ENCODE measurements at regions of chr3 and their contacts with region 1.

Region 1: GRCh38 chr3:40524568-40525285 is at the start of gene ZNF621:
- DNase-seq: peak; percentile 92
- H3K4me3 ChIP-seq: peak within 1 kb of the TSS; percentile 51
- H3K27ac ChIP-seq: peak within 1 kb of the TSS; percentile 82
- H3K4me1 ChIP-seq: peaks cover 3% of the 10 kb centered on the region
- H3K27me3 ChIP-seq: no peaks in the 10 kb centered on the region
- CTCF ChIP-seq: no peak
- total RNA-seq, gene ZNF621: 13.5 to 14.3 TPM

Region 2: DNA sequence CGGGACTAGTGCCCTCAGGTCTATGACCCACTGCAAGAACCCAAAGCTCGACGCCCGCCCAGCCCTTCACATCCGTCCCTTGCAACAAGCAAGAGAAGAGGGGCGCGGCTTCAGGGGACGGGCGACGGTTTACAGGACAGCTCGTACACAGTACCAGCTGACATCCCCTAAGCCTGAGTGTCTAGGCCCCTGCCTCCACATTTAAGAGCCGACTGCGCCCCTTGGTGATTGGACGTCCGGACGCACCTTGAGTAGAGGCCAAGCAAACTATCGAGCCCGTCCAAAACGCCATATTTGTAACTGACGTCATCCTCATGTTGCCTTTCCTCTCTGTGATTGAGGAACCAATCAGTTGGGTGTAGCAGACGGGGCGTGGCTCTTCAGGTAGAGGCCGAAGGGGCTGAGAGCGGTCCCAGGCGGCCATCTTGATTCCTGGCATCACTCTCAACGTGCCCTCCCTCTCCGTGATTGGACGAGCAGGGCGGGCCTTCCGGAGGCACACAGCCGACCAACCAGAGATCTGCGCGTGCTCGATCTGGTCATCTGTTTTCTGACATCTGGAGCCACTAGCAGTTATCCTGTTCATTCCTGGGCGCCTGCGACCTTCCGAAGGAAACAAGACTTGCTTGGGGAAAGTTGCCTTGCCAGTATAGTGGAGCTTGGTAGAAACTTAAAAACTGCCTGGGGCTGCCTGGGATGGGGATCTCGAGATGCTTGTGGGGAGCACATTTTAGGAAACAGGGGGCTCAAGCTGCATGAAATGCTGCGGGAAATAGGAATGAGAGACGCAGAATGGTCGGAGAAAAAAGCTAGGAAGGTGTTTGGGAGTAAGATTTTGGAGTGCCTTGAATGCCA is 71.6 kb before region 1 on chr3:
- intact Hi-C with region 1: loop called (anchors 10 kb)
- DNase-seq: peak; percentile 98
- H3K4me3 ChIP-seq: peak overlapping the region; percentile 58
- H3K27ac ChIP-seq: peak overlapping the region; percentile 89
- H3K4me1 ChIP-seq: peaks cover 5% of the 10 kb centered on the region
- H3K27me3 ChIP-seq: no peaks in the 10 kb centered on the region
- CTCF ChIP-seq: no peak

Region 3: GRCh38 chr3:40566694-40567093 is 42.0 kb after region 1 on chr3:
- intact Hi-C with region 1: no loop called
- DNase-seq: no peak
- H3K4me3 ChIP-seq: no peak overlapping the region
- H3K27ac ChIP-seq: no peak overlapping the region
- H3K4me1 ChIP-seq: no peaks in the 10 kb centered on the region
- H3K27me3 ChIP-seq: no peaks in the 10 kb centered on the region
- CTCF ChIP-seq: no peak